ENCODE measurements at regions of chr5 and their contacts with region 1.

Region 1: GRCh38 chr5:138178516-138179276 is at the starts of genes BRD8 and KIF20A:
- DNase-seq: peak; percentile 97
- H3K4me3 ChIP-seq: peak within 1 kb of the TSS; percentile 71 to 99 (median 91)
- H3K27ac ChIP-seq: peak within 1 kb of the TSS; percentile 84 to 93 (median 92)
- H3K4me1 ChIP-seq: peaks cover 15 to 31% (median 21%) of the 10 kb centered on the region in 4 donors
- H3K27me3 ChIP-seq: no peaks in the 10 kb centered on the region
- CTCF ChIP-seq: no peak
- EP300 ChIP-seq: no peak
- POLR2A ChIP-seq: peak; percentile 22
- total RNA-seq, gene BRD8: 31.0 to 168 (median 47.7) TPM
- total RNA-seq, gene KIF20A: 1.9 to 5.0 (median 1.9) TPM in 3 of 4 donors, not detected in the other

Region 2: DNA sequence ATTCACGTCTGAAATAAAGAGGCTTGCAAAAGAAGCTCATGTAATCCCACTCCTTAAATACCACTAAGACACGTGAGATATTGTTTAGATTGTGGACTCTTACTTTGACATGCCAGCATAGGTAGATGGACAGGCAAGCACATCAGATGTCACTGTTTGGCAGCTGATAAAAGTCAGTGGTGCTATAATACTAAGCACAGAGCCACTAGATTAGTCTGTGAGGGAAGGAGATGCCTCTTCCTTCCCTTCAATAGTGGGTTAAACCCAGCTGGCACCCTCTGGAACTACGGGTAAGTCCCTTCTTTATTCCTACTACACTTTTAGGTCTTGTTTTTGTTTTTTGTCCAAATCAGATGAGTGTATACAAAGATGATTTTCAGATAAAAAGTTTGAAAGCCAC is 311.0 kb before region 1 on chr5 and contains the start of gene MYOT:
- in situ Hi-C with region 1: no loop called
- intact Hi-C with region 1: no loop called
- DNase-seq: no peak
- H3K4me3 ChIP-seq: no peak within 1 kb of the TSS
- H3K27ac ChIP-seq: no peak within 1 kb of the TSS
- H3K4me1 ChIP-seq: no peaks in the 10 kb centered on the region
- H3K27me3 ChIP-seq: no peaks in the 10 kb centered on the region
- CTCF ChIP-seq: no peak
- EP300 ChIP-seq: no peak
- POLR2A ChIP-seq: no peak
- total RNA-seq, gene MYOT: 2.9 to 7.1 (median 5.9) TPM in 3 of 4 donors, not detected in the other

Region 3: GRCh38 chr5:138210985-138211384 is 32.3 kb after region 1 on chr5:
- in situ Hi-C with region 1: no loop called
- intact Hi-C with region 1: no loop called
- DNase-seq: no peak
- H3K4me3 ChIP-seq: no peak overlapping the region
- H3K27ac ChIP-seq: no peak overlapping the region
- H3K4me1 ChIP-seq: peaks cover 12 to 30% (median 18%) of the 10 kb centered on the region in 4 donors
- H3K27me3 ChIP-seq: no peaks in the 10 kb centered on the region
- CTCF ChIP-seq: no peak
- EP300 ChIP-seq: no peak
- POLR2A ChIP-seq: no peak

Region 4: GRCh38 chr5:138408023-138408422 is 229.3 kb after region 1 on chr5:
- in situ Hi-C with region 1: loop called in 1 of 4 experiments (anchors 25 kb)
- intact Hi-C with region 1: no loop called
- DNase-seq: peak; percentile 14
- H3K4me3 ChIP-seq: no peak overlapping the region
- H3K27ac ChIP-seq: no peak overlapping the region
- H3K4me1 ChIP-seq: no peaks in the 10 kb centered on the region
- H3K27me3 ChIP-seq: no peaks in the 10 kb centered on the region
- CTCF ChIP-seq: no peak
- EP300 ChIP-seq: no peak
- POLR2A ChIP-seq: no peak

Region 5: DNA sequence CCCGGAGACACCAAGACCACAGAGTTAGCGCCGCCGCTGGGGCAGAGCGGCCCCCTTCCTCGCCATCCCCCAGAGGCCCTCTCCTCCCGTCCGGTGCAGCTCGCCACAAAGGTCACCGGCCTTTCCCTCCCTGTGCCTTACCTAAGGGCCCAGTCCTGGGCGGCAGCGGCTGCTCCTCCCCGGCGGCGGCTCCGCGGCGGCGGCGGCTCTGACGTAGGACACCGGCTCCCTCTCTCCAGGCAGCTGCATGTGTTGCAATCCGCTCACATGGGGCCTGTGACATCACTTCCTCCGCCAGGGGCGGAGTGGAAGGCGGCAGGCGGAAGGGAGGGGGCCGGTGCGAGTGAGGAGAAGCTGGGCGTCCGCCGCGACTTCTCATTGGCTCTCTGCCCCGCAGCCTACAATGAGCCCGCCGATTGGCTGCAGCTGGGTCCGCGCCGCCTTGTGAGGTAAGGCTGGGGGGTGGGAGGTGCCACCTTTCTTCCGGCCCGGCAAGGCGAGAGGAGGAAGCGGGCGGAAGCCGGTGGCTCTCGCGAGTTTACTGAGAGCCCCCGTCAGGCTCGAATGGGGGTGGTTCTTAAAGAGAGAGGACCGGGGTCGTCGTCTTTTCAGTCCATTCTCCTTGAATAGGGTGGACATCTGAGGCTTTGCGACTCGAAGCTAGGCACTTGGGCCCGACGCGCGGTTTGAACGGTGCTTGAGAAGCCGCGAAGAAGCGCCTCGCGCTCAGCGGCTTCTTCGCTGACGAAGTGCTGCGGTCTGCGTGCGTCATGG is 364.4 kb after region 1 on chr5 and contains the start of gene ETF1:
- in situ Hi-C with region 1: loop called in 1 of 4 experiments (anchors 25 kb)
- intact Hi-C with region 1: no loop called
- DNase-seq: peak; percentile 100
- H3K4me3 ChIP-seq: peak within 1 kb of the TSS; percentile 84 to 90 (median 87)
- H3K27ac ChIP-seq: peak within 1 kb of the TSS; percentile 96 to 99 (median 98)
- H3K4me1 ChIP-seq: peaks cover 28 to 76% (median 46%) of the 10 kb centered on the region in 4 donors
- H3K27me3 ChIP-seq: no peaks in the 10 kb centered on the region
- CTCF ChIP-seq: peak in 1 of 5 experiments; percentile 31
- EP300 ChIP-seq: peak; percentile 57
- POLR2A ChIP-seq: peak; percentile 99
- total RNA-seq, gene ETF1: 39.8 to 66.6 (median 54.1) TPM

Measured in transverse colon (tissue), 4 donors.